BJ (cell line): ENCODE measurements at regions of chr9 and their contacts with region 1.

Region 1: GRCh38 chr9:124708633-124709291 is 62.3 kb downstream of the NR6A1 start:
- DNase-seq: peak; percentile 70
- H3K4me3 ChIP-seq: no peak overlapping the region
- H3K27me3 ChIP-seq: no peaks in the 10 kb centered on the region
- CTCF ChIP-seq: no peak

Region 2: GRCh38 chr9:124574534-124575341 is 134.0 kb before region 1 on chr9:
- CTCF ChIA-PET with region 1: interaction called, 15 read pairs
- POLR2A ChIA-PET with region 1: no interaction called
- DNase-seq: peak; percentile 60
- H3K4me3 ChIP-seq: no peak overlapping the region
- H3K27me3 ChIP-seq: no peaks in the 10 kb centered on the region
- CTCF ChIP-seq: no peak

Region 3: GRCh38 chr9:124629600-124629999 is 79.2 kb before region 1 on chr9:
- CTCF ChIA-PET with region 1: interaction called, 37 read pairs
- POLR2A ChIA-PET with region 1: no interaction called
- DNase-seq: no peak
- H3K4me3 ChIP-seq: no peak overlapping the region
- H3K27me3 ChIP-seq: no peaks in the 10 kb centered on the region
- CTCF ChIP-seq: no peak

Region 4: GRCh38 chr9:124721109-124721906 is 12.5 kb after region 1 on chr9:
- CTCF ChIA-PET with region 1: interaction called, 20 read pairs
- POLR2A ChIA-PET with region 1: no interaction called
- DNase-seq: peak; percentile 37
- H3K4me3 ChIP-seq: no peak overlapping the region
- H3K27me3 ChIP-seq: no peaks in the 10 kb centered on the region
- CTCF ChIP-seq: no peak

Region 5: GRCh38 chr9:124754289-124754688 is 45.5 kb after region 1 on chr9:
- CTCF ChIA-PET with region 1: interaction called, 12 read pairs
- POLR2A ChIA-PET with region 1: no interaction called
- DNase-seq: no peak
- H3K4me3 ChIP-seq: no peak overlapping the region
- H3K27me3 ChIP-seq: peaks cover 2% of the 10 kb centered on the region
- CTCF ChIP-seq: peak; percentile 72

Region 6: GRCh38 chr9:124852829-124853531 is 144.2 kb after region 1 on chr9 and contains the start of gene WDR38:
- CTCF ChIA-PET with region 1: no interaction called
- POLR2A ChIA-PET with region 1: no interaction called
- DNase-seq: no peak
- H3K4me3 ChIP-seq: peak within 1 kb of the TSS; percentile 46
- H3K27me3 ChIP-seq: peaks cover 3% of the 10 kb centered on the region; the same call in 1 of the 2 replicates
- CTCF ChIP-seq: peak; percentile 88
- polyA plus RNA-seq, gene WDR38: not detected in 2 replicates